Natural killer cell (primary cell): ENCODE measurements at regions of chr7 and their contacts with region 1.

Region 1: GRCh38 chr7:8152489-8153192 is 109.3 kb downstream of the ICA1 start:
- DNase-seq: peak; percentile 52 to 55
- ATAC-seq: peak; percentile 57 to 74 (median 68)
- H3K4me3 ChIP-seq: no peak overlapping the region
- H3K4me3 Mint-ChIP-seq: peak overlapping the region; percentile 53
- H3K27ac ChIP-seq: peak overlapping the region; percentile 0
- H3K27ac Mint-ChIP-seq: peak overlapping the region; percentile 75 to 95
- H3K4me1 ChIP-seq: peaks cover 9% of the 10 kb centered on the region
- H3K4me1 Mint-ChIP-seq: peaks cover 39 to 42% of the 10 kb centered on the region in 2 donors
- H3K27me3 ChIP-seq: no peaks in the 10 kb centered on the region
- H3K27me3 Mint-ChIP-seq: peaks cover 0 to 4% of the 10 kb centered on the region in 2 donors
- CTCF ChIP-seq: no peak

Region 2: GRCh38 chr7:8176370-8177081 is 23.9 kb after region 1 on chr7:
- intact Hi-C with region 1: loop called (anchors 2 kb)
- DNase-seq: peak; percentile 32 to 88
- ATAC-seq: peak; percentile 83 to 93 (median 89)
- H3K4me3 ChIP-seq: peak overlapping the region; percentile 2
- H3K4me3 Mint-ChIP-seq: peak overlapping the region; percentile 77
- H3K27ac ChIP-seq: peak overlapping the region; percentile 87
- H3K27ac Mint-ChIP-seq: peak overlapping the region; percentile 85 to 97
- H3K4me1 ChIP-seq: peaks cover 36% of the 10 kb centered on the region
- H3K4me1 Mint-ChIP-seq: peaks cover 54 to 59% of the 10 kb centered on the region in 2 donors
- H3K27me3 ChIP-seq: no peaks in the 10 kb centered on the region
- H3K27me3 Mint-ChIP-seq: no peaks in the 10 kb centered on the region
- CTCF ChIP-seq: no peak

Region 3: GRCh38 chr7:8197994-8198698 is 45.5 kb after region 1 on chr7:
- intact Hi-C with region 1: loop called (anchors 1 kb)
- DNase-seq: peak; percentile 24 to 74
- ATAC-seq: peak; percentile 75 to 93 (median 80)
- H3K4me3 ChIP-seq: no peak overlapping the region
- H3K4me3 Mint-ChIP-seq: peak overlapping the region; percentile 33
- H3K27ac ChIP-seq: no peak overlapping the region
- H3K27ac Mint-ChIP-seq: peak overlapping the region; percentile 39 to 50
- H3K4me1 ChIP-seq: peaks cover 20% of the 10 kb centered on the region
- H3K4me1 Mint-ChIP-seq: peaks cover 25 to 37% of the 10 kb centered on the region in 2 donors
- H3K27me3 ChIP-seq: peaks cover 4% of the 10 kb centered on the region
- H3K27me3 Mint-ChIP-seq: peaks cover 25 to 28% of the 10 kb centered on the region in 2 donors
- CTCF ChIP-seq: no peak